ENCODE measurements at regions of chr19 and their contacts with region 1.

Region 1: DNA sequence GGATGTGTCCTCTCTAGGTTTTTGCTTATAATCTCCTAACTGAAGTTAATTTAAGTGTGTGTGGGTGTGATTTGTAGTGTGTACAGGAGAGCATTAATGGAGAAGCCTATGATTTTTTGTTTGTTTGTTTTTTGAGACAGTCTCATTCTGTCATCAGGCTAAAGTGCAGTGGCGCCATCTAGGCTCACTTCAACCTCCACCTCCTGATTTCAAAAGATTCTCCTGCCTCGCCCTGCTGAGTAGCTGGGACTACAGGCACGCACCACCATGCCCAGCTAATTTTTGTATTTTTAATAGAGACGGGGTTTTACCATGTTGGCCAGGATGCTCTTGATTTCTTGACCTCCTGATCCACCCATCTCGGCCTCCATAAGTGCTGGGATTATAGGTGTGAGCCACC is 20.6 kb downstream of the ZNF701 start:
- DNase-seq: peak; percentile 52
- ATAC-seq: peak; percentile 46; the same call in 1 of the 2 replicates
- H3K4me3 Mint-ChIP-seq: no peak overlapping the region
- H3K27ac Mint-ChIP-seq: peak overlapping the region; percentile 53; the same call in 1 of the 2 replicates
- H3K4me1 Mint-ChIP-seq: peaks cover 9% of the 10 kb centered on the region
- H3K27me3 Mint-ChIP-seq: no peaks in the 10 kb centered on the region
- CTCF ChIP-seq: no peak

Region 2: GRCh38 chr19:52601025-52601973 is 10.6 kb after region 1 on chr19:
- CTCF ChIA-PET with region 1: interaction called, 10 read pairs
- POLR2A ChIA-PET with region 1: no interaction called
- DNase-seq: peak; percentile 98
- ATAC-seq: peak; percentile 94
- H3K4me3 Mint-ChIP-seq: peak overlapping the region; percentile 82
- H3K27ac Mint-ChIP-seq: peak overlapping the region; percentile 49; the same call in 1 of the 2 replicates
- H3K4me1 Mint-ChIP-seq: peaks cover 29% of the 10 kb centered on the region
- H3K27me3 Mint-ChIP-seq: no peaks in the 10 kb centered on the region; the same call in 1 of the 2 replicates
- CTCF ChIP-seq: no peak

Region 3: GRCh38 chr19:52679598-52679997 is 88.9 kb after region 1 on chr19:
- CTCF ChIA-PET with region 1: no interaction called
- POLR2A ChIA-PET with region 1: no interaction called
- DNase-seq: no peak
- ATAC-seq: no peak
- H3K4me3 Mint-ChIP-seq: no peak overlapping the region
- H3K27ac Mint-ChIP-seq: no peak overlapping the region
- H3K4me1 Mint-ChIP-seq: no peaks in the 10 kb centered on the region
- H3K27me3 Mint-ChIP-seq: 0 out of 2 replicates have a peak, but pooled peaks cover 3% of the 10 kb centered on the region
- CTCF ChIP-seq: no peak

Measured in WTC11 (cell line).